ENCODE measurements at regions of chr13 and their contacts with region 1.

Region 1: GRCh38 chr13:101942038-101942437 is 459.8 kb downstream of the FGF14 start:
- DNase-seq: peak; percentile 80
- H3K4me3 ChIP-seq: no peak overlapping the region
- H3K27ac ChIP-seq: no peak overlapping the region
- H3K4me1 ChIP-seq: peaks cover 13% of the 10 kb centered on the region
- H3K27me3 ChIP-seq: no peaks in the 10 kb centered on the region
- CTCF ChIP-seq: peak; percentile 88

Region 2: DNA sequence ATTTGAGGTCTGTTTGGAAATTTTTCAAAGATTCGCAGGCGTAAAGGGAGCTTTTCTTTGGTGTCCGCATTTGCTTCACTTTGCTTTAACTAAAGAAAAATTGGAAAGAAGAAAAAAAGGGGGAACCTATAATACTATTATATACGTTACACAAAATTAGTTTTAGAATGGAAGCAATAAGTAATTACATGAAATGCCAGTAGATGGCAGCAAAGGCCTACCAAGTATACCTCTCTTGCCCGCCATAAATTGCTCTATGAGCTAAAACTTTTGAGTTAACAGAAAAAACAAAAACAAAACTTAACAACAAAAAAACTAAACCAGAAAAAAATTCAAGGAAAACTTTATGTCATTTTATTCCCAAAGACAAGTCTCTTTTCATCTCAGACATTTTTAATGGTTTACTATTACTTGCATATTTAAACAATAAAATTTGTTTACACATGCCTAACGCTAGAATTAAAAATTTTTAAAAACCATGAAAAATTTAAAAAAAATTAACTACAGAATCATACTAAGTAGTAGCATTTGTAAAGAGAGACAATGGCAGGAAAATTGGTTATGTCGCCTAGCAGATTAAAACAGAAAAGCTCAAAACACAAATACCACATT is 797.1 kb before region 1 on chr13:
- CTCF ChIA-PET with region 1: interaction called, 11 read pairs
- POLR2A ChIA-PET with region 1: no interaction called
- intact Hi-C with region 1: loop called (anchors 2 kb)
- DNase-seq: peak; percentile 75
- H3K4me3 ChIP-seq: no peak overlapping the region
- H3K27ac ChIP-seq: no peak overlapping the region
- H3K4me1 ChIP-seq: no peaks in the 10 kb centered on the region
- H3K27me3 ChIP-seq: no peaks in the 10 kb centered on the region
- CTCF ChIP-seq: peak; percentile 71

Region 3: DNA sequence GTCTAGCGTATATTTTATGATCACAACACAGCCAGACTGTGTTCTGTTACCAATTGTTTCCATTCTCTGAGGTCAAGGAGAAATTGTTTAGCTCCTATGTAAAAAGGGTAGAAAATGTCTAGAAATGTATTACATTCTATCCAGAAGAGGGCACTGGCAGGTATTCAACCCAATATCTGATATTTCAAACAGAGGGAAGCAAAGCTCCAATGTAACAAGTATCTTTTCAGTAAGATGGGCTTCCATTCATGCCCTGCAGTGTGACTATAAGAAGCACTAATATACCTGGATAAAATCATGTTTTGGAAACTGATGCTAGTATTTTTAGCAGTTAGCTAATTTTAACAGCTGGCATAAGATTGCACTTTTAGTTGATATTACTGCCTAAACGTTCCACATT is 147.1 kb after region 1 on chr13:
- CTCF ChIA-PET with region 1: interaction called, 7 read pairs
- POLR2A ChIA-PET with region 1: no interaction called
- intact Hi-C with region 1: loop called (anchors 10 kb)
- DNase-seq: peak; percentile 34
- H3K4me3 ChIP-seq: no peak overlapping the region
- H3K27ac ChIP-seq: no peak overlapping the region
- H3K4me1 ChIP-seq: peaks cover 4% of the 10 kb centered on the region
- H3K27me3 ChIP-seq: no peaks in the 10 kb centered on the region
- CTCF ChIP-seq: peak; percentile 52

Region 4: DNA sequence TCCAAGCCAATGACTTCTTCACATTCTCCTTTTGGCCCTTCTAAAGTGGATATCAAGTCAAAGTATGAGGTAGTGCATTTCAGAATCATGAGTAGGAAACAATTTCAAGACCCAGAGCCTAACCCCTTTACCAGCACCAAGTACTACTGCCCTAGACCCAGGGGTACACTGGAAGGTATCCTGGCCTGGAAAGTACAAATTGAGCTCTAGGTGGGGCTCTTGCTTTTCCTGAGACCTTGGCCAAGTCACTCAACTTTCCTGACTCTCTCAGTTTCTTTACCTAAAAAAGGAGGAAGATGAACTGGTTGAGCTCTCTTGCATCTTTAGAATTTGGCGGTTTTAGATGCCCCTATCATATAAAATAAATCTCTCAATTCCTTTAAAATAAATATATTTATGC is 255.2 kb after region 1 on chr13:
- CTCF ChIA-PET with region 1: no interaction called
- POLR2A ChIA-PET with region 1: no interaction called
- intact Hi-C with region 1: loop called (anchors 2 kb)
- DNase-seq: peak; percentile 78
- H3K4me3 ChIP-seq: no peak overlapping the region
- H3K27ac ChIP-seq: no peak overlapping the region
- H3K4me1 ChIP-seq: peaks cover 29% of the 10 kb centered on the region
- H3K27me3 ChIP-seq: no peaks in the 10 kb centered on the region
- CTCF ChIP-seq: peak; percentile 64

Region 5: GRCh38 chr13:102460801-102461200 is 518.8 kb after region 1 on chr13:
- CTCF ChIA-PET with region 1: interaction called, 6 read pairs
- POLR2A ChIA-PET with region 1: no interaction called
- intact Hi-C with region 1: loop called (anchors 2 kb)
- DNase-seq: no peak
- H3K4me3 ChIP-seq: no peak overlapping the region
- H3K27ac ChIP-seq: no peak overlapping the region
- H3K4me1 ChIP-seq: peaks cover 6% of the 10 kb centered on the region
- H3K27me3 ChIP-seq: no peaks in the 10 kb centered on the region
- CTCF ChIP-seq: no peak

Region 6: GRCh38 chr13:102724923-102725322 is 782.9 kb after region 1 on chr13:
- CTCF ChIA-PET with region 1: interaction called, 5 read pairs
- POLR2A ChIA-PET with region 1: no interaction called
- intact Hi-C with region 1: loop called (anchors 10 kb)
- DNase-seq: peak; percentile 60
- H3K4me3 ChIP-seq: no peak overlapping the region
- H3K27ac ChIP-seq: no peak overlapping the region
- H3K4me1 ChIP-seq: peaks cover 3% of the 10 kb centered on the region
- H3K27me3 ChIP-seq: no peaks in the 10 kb centered on the region
- CTCF ChIP-seq: peak; percentile 65

Measured in A673 (cell line).